Natural killer cell (primary cell): ENCODE measurements at regions of chr17 and their contacts with region 1.

Region 1: DNA sequence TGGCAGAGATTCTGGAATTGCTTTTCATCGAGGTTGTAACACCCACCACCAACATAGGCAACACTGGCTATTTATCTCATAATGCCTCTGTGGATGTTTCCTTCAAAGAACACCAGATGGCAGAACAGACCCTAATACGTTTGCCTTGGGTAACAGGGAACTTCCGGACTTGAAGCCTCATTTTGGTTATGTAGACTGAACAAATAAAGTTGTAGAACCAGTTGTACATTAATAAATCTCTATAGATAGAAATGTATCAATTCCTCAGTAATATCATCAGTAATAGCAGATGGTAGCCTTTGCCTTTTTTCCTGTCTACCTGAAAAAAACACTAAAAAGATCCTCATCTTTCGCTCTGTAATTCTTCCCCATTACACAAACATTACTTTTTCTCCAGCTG is 25.9 kb upstream of the APOH start:
- DNase-seq: peak in 1 of 2 donors; percentile 87
- ATAC-seq: peak; percentile 82 to 95 (median 94)
- H3K4me3 ChIP-seq: no peak overlapping the region
- H3K4me3 Mint-ChIP-seq: no peak overlapping the region
- H3K27ac ChIP-seq: no peak overlapping the region
- H3K27ac Mint-ChIP-seq: peak overlapping the region in 1 of 2 donors; percentile 10
- H3K4me1 ChIP-seq: no peaks in the 10 kb centered on the region
- H3K4me1 Mint-ChIP-seq: peaks cover 0 to 6% of the 10 kb centered on the region in 2 donors
- H3K27me3 ChIP-seq: no peaks in the 10 kb centered on the region
- H3K27me3 Mint-ChIP-seq: no peaks in the 10 kb centered on the region
- CTCF ChIP-seq: peak; percentile 69

Region 2: GRCh38 chr17:66426397-66427033 is 171.4 kb after region 1 on chr17:
- intact Hi-C with region 1: loop called (anchors 1 kb)
- DNase-seq: peak in 1 of 2 donors; percentile 80
- ATAC-seq: peak; percentile 76 to 94 (median 82)
- H3K4me3 ChIP-seq: no peak overlapping the region
- H3K4me3 Mint-ChIP-seq: peak overlapping the region; percentile 37
- H3K27ac ChIP-seq: no peak overlapping the region
- H3K27ac Mint-ChIP-seq: peak overlapping the region in 1 of 2 donors; percentile 25
- H3K4me1 ChIP-seq: peaks cover 11% of the 10 kb centered on the region
- H3K4me1 Mint-ChIP-seq: peaks cover 14 to 18% of the 10 kb centered on the region in 2 donors
- H3K27me3 ChIP-seq: no peaks in the 10 kb centered on the region
- H3K27me3 Mint-ChIP-seq: no peaks in the 10 kb centered on the region
- CTCF ChIP-seq: peak; percentile 42

Region 3: GRCh38 chr17:66567234-66568170 is 312.4 kb after region 1 on chr17:
- intact Hi-C with region 1: loop called (anchors 1 kb)
- DNase-seq: peak; percentile 79 to 86
- ATAC-seq: peak; percentile 76 to 98 (median 96)
- H3K4me3 ChIP-seq: no peak overlapping the region
- H3K4me3 Mint-ChIP-seq: no peak overlapping the region
- H3K27ac ChIP-seq: no peak overlapping the region
- H3K27ac Mint-ChIP-seq: peak overlapping the region in 1 of 2 donors; percentile 23
- H3K4me1 ChIP-seq: peaks cover 6% of the 10 kb centered on the region
- H3K4me1 Mint-ChIP-seq: peaks cover 7 to 10% of the 10 kb centered on the region in 2 donors
- H3K27me3 ChIP-seq: no peaks in the 10 kb centered on the region
- H3K27me3 Mint-ChIP-seq: no peaks in the 10 kb centered on the region
- CTCF ChIP-seq: peak; percentile 88

Region 4: DNA sequence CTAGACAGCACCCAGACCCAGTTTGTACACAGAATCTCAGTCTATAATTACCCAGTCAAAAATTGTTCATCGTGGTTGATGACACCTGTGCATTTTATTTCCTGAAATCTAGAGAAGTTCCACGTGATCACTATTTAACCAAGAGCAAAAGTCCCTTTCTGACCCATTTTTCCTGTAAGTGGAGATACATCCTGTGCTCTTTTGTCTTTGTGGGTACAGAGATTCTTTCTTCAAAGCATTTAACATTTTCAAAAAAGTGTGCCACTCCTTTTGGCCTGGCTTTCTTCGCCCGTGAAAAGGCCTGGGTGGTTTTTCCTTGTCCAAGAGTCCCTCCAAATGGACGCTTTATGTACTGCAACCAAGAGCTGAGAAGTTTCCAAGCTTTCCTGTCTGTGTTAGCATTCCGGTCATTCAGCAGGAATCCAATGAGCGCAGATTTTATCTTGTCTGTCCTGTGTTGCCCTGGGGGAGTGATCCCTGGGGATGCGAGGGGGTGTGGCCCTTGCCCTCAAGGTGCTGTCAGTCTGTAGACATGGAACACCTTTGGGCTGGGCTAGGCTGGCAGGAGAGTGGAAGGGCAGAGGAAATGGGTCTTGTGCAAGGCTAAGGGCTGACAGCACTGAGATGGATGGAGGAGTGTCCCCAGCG is 418.7 kb after region 1 on chr17:
- intact Hi-C with region 1: loop called (anchors 5 kb)
- DNase-seq: peak in 1 of 2 donors; percentile 86
- ATAC-seq: peak; percentile 62 to 85 (median 75)
- H3K4me3 ChIP-seq: no peak overlapping the region
- H3K4me3 Mint-ChIP-seq: peak overlapping the region; percentile 32
- H3K27ac ChIP-seq: peak overlapping the region; percentile 69
- H3K27ac Mint-ChIP-seq: peak overlapping the region; percentile 72 to 82
- H3K4me1 ChIP-seq: peaks cover 30% of the 10 kb centered on the region
- H3K4me1 Mint-ChIP-seq: peaks cover 29 to 32% of the 10 kb centered on the region in 2 donors
- H3K27me3 ChIP-seq: no peaks in the 10 kb centered on the region
- H3K27me3 Mint-ChIP-seq: no peaks in the 10 kb centered on the region
- CTCF ChIP-seq: peak; percentile 33

Region 5: GRCh38 chr17:66906321-66907278 is 651.5 kb after region 1 on chr17:
- intact Hi-C with region 1: loop called (anchors 2 kb)
- DNase-seq: peak; percentile 45 to 80
- ATAC-seq: peak; percentile 55 to 83 (median 72)
- H3K4me3 ChIP-seq: no peak overlapping the region
- H3K4me3 Mint-ChIP-seq: no peak overlapping the region
- H3K27ac ChIP-seq: no peak overlapping the region
- H3K27ac Mint-ChIP-seq: no peak overlapping the region
- H3K4me1 ChIP-seq: no peaks in the 10 kb centered on the region
- H3K4me1 Mint-ChIP-seq: peaks cover 6 to 8% of the 10 kb centered on the region in 2 donors
- H3K27me3 ChIP-seq: no peaks in the 10 kb centered on the region
- H3K27me3 Mint-ChIP-seq: peaks cover 0 to 8% of the 10 kb centered on the region in 2 donors
- CTCF ChIP-seq: peak; percentile 86